ENCODE measurements at regions of chr1 and their contacts with region 1.

Region 1: DNA sequence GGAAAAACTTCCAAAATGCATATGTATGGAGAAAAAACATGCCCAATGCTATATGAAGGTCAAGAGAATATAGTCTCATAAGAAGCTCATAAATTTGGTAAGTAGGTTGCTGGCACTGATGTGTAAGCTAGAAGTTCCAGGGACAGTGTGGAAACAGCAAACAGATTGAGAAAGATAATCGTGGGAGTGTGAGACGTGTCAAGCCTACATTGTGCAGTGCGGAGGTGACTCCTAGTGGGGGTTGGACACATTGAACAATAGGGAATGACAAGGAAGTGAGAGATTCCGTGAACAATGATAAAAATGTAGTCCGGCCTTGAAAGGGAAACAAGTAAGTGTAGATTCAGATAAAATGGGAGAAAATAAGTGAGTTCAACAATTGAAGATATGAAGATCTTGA is 788.4 kb upstream of the PRMT6 start:
- DNase-seq: peak; percentile 71
- ATAC-seq: peak; percentile 86
- H3K4me3 ChIP-seq: no peak overlapping the region
- H3K27ac ChIP-seq: no peak overlapping the region
- H3K4me1 ChIP-seq: no peaks in the 10 kb centered on the region
- H3K27me3 ChIP-seq: no peaks in the 10 kb centered on the region
- CTCF ChIP-seq: peak; percentile 73

Region 2: GRCh38 chr1:105700728-105701127 is 567.3 kb before region 1 on chr1:
- CTCF ChIA-PET with region 1: no interaction called
- POLR2A ChIA-PET with region 1: no interaction called
- intact Hi-C with region 1: loop called (anchors 5 kb)
- DNase-seq: no peak
- ATAC-seq: no peak
- H3K4me3 ChIP-seq: no peak overlapping the region
- H3K27ac ChIP-seq: no peak overlapping the region
- H3K4me1 ChIP-seq: no peaks in the 10 kb centered on the region
- H3K27me3 ChIP-seq: peaks cover 10% of the 10 kb centered on the region; the same call in 1 of the 2 replicates
- CTCF ChIP-seq: no peak

Region 3: GRCh38 chr1:106022312-106022902 is 245.6 kb before region 1 on chr1:
- CTCF ChIA-PET with region 1: no interaction called
- POLR2A ChIA-PET with region 1: no interaction called
- intact Hi-C with region 1: loop called (anchors 2 kb)
- DNase-seq: peak; percentile 51
- ATAC-seq: no peak
- H3K4me3 ChIP-seq: no peak overlapping the region
- H3K27ac ChIP-seq: no peak overlapping the region
- H3K4me1 ChIP-seq: no peaks in the 10 kb centered on the region
- H3K27me3 ChIP-seq: no peaks in the 10 kb centered on the region
- CTCF ChIP-seq: peak; percentile 68

Region 4: GRCh38 chr1:106121728-106122127 is 146.3 kb before region 1 on chr1:
- CTCF ChIA-PET with region 1: no interaction called
- POLR2A ChIA-PET with region 1: no interaction called
- intact Hi-C with region 1: no loop called
- DNase-seq: no peak
- ATAC-seq: no peak
- H3K4me3 ChIP-seq: no peak overlapping the region
- H3K27ac ChIP-seq: no peak overlapping the region
- H3K4me1 ChIP-seq: no peaks in the 10 kb centered on the region
- H3K27me3 ChIP-seq: no peaks in the 10 kb centered on the region
- CTCF ChIP-seq: no peak

Measured in PC-3 (cell line).